Activated naive CD8-positive, alpha-beta T cell treated with anti-CD3 and anti-CD28 coated beads, Interleukin-2, amount 10 ng/mL, durations not matched to agents 7 days and 5 days (primary cell): ENCODE measurements at regions of chr3 and their contacts with region 1.

Region 1: DNA sequence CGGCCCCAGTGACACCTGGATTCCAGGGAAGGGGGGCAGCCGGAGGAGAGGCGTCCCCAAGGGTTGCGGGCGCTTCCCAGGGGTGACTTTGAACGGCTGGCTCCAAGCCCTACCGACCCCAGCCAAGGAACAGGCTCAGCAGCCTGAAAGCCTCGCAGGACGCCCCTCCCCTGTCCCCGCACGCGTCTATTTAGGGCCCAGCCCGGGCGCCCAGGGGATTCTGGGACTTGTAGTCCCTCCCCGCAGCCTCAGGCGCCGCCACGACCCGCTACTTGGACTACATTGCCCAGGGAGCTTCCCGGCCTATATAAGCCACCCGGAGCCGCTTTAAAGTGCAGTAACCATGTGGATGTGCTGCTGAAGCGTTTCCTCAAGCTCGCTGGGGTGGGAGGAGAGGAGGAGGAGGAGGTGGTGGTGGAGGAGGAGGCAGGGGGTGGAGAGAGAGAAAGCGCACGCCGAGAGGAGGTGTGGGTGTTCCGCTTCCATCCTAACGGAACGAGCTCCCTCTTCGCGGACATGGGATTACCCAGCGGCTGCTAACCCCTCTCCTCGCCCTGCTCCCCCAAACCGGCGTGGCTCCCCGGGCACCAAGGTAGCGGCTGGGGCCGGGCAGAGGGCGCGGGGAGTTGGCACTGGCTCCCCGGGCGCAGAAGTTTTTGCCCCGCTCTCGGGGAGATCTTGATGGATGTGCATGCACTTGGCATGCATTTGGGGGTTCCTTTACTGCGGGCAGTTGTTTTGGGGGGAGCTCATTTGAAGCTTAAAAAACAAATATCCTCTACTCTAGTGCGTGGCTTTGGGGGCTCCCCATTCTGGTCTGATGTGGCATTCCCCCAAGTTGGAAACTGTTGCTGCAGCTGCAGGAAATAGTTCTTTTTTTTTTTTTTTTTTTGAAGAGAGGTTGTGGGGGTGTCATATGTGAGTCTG is at the start of gene ITPR1:
- DNase-seq: peak; percentile 94
- ATAC-seq: peak; percentile 92
- H3K4me3 Mint-ChIP-seq: peak within 1 kb of the TSS; percentile 91
- H3K27ac Mint-ChIP-seq: peak within 1 kb of the TSS; percentile 88
- H3K4me1 Mint-ChIP-seq: peaks cover 30% of the 10 kb centered on the region
- H3K27me3 Mint-ChIP-seq: peaks cover 20% of the 10 kb centered on the region
- total RNA-seq, gene ITPR1: 74.3 to 76.2 TPM

Region 2: DNA sequence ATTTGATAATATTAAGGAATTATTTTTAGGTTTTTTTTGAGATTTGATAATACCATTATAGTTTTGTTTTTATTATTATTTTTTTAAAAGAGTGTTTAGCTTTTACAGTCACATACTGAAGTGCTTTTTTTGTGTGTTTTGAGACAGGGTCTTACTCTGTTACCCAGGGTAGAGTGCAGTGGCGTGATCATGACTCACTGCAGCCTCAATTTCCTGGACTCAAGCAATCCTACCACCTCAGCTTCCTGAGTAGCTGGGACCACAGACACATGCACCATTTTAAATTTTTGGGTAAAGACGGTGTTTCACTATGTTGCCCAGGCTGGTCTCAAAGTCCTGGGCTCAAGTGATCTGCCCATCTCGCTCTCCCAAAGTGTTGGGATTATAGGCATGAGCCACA is 99.2 kb before region 1 on chr3:
- POLR2A ChIA-PET with region 1: interaction called, 21 read pairs
- DNase-seq: peak; percentile 42
- ATAC-seq: peak; percentile 89
- H3K4me3 Mint-ChIP-seq: peak overlapping the region; percentile 49
- H3K27ac Mint-ChIP-seq: peak overlapping the region; percentile 89
- H3K4me1 Mint-ChIP-seq: peaks cover 38% of the 10 kb centered on the region
- H3K27me3 Mint-ChIP-seq: no peaks in the 10 kb centered on the region

Region 3: GRCh38 chr3:4474683-4475490 is 18.4 kb before region 1 on chr3:
- POLR2A ChIA-PET with region 1: interaction called, 12 read pairs
- DNase-seq: no peak
- ATAC-seq: peak; percentile 83
- H3K4me3 Mint-ChIP-seq: peak overlapping the region; percentile 56
- H3K27ac Mint-ChIP-seq: peak overlapping the region; percentile 68
- H3K4me1 Mint-ChIP-seq: peaks cover 8% of the 10 kb centered on the region
- H3K27me3 Mint-ChIP-seq: peaks cover 22% of the 10 kb centered on the region

Region 4: GRCh38 chr3:4517643-4518311 is 24.5 kb after region 1 on chr3:
- POLR2A ChIA-PET with region 1: interaction called, 40 read pairs
- DNase-seq: no peak
- ATAC-seq: peak; percentile 7
- H3K4me3 Mint-ChIP-seq: peak overlapping the region; percentile 72
- H3K27ac Mint-ChIP-seq: peak overlapping the region; percentile 85
- H3K4me1 Mint-ChIP-seq: peaks cover 30% of the 10 kb centered on the region
- H3K27me3 Mint-ChIP-seq: no peaks in the 10 kb centered on the region